Left cardiac atrium (tissue), 4 donors: ENCODE measurements at regions of chr1 and their contacts with region 1.

Region 1: GRCh38 chr1:6794164-6794563 is 8.9 kb downstream of the CAMTA1 start:
- DNase-seq: no peak
- ATAC-seq: no peak

Region 2: DNA sequence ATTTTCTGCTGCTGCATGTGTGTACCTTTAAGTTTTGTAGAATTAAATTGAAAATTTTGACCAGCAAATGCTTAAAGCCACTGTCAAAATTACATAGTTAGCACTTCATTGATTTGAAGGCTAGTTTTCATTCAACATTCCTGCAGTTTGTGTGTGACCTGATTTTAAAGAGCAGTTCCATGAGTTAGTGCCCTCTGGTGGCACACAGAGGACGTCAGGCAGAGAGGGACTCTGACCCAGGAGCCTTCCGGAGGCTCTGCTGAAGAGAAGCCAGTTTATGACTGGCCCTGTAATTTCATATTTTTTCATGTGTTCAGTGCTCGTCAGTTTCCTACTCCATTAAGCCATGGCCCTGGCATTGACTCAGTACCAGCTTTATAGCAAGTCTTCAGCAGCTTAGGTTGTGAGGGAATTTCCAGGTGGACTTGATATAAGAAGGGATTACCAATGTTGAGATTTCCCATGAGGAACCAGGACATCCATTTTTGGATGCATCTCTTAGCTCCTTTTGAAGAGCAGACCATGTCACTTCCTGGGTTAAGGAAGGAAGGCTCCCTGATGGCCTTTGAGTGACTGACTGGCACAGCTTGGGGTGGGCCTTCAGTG is 95.8 kb after region 1 on chr1:
- intact Hi-C with region 1: loop called in 1 of 2 experiments (anchors 5 kb)
- DNase-seq: peak; percentile 53
- ATAC-seq: peak; percentile 82 to 83

Region 3: GRCh38 chr1:7070389-7071029 is 276.3 kb after region 1 on chr1:
- intact Hi-C with region 1: loop called in 1 of 2 experiments (anchors 5 kb)
- DNase-seq: peak; percentile 70
- ATAC-seq: peak; percentile 87 to 93

Region 4: GRCh38 chr1:7207875-7208646 is 413.9 kb after region 1 on chr1:
- intact Hi-C with region 1: loop called in 1 of 2 experiments (anchors 10 kb)
- DNase-seq: peak; percentile 40
- ATAC-seq: peak; percentile 57 to 67